BJ (cell line): ENCODE measurements at regions of chr4 and their contacts with region 1.

Region 1: DNA sequence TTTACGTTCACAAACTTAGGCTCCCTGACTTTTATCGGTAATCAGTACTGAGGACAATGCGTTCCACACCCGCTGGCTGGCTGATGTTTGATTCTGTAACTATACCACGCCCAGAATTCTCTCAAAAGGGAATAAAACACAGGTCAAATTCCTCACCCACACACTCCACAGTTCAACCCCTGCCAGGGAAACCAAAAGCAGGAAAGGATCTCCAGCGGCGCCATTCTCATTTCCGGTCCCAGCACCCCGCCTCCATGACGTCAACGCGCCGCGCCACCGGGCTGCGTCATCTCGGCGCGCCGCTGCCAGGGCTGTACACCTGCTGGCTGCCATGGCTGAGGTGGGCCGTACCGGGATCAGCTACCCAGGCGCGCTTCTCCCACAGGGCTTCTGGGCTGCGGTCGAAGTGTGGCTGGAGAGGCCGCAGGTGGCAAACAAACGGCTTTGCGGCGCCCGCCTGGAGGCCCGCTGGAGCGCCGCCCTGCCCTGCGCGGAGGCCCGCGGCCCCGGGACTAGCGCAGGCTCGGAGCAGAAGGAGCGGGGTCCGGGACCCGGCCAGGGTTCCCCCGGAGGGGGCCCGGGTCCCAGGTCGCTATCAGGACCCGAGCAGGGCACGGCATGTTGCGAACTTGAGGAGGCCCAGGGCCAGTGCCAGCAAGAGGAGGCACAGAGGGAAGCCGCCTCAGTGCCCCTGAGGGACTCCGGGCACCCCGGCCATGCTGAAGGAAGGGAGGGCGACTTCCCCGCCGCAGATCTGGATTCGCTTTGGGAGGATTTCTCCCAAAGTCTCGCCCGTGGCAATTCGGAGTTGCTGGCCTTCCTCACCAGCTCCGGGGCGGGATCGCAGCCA is at the starts of genes ACOX3 and TRMT44:
- DNase-seq: peak; percentile 37
- H3K4me3 ChIP-seq: peak within 1 kb of the TSS; percentile 90
- H3K27me3 ChIP-seq: no peaks in the 10 kb centered on the region
- CTCF ChIP-seq: no peak
- polyA plus RNA-seq, gene ACOX3: 6.8 and 10.2 TPM in 2 replicates
- polyA plus RNA-seq, gene TRMT44: 5.3 and 7.1 TPM in 2 replicates

Region 2: GRCh38 chr4:8428293-8429097 is 12.2 kb before region 1 on chr4:
- CTCF ChIA-PET with region 1: interaction called, 10 read pairs
- POLR2A ChIA-PET with region 1: no interaction called
- DNase-seq: no peak
- H3K4me3 ChIP-seq: peak overlapping the region; percentile 96
- H3K27me3 ChIP-seq: no peaks in the 10 kb centered on the region
- CTCF ChIP-seq: peak; percentile 62